T-cell (primary cell): ENCODE measurements at regions of chr7 and their contacts with region 1.

Region 1: GRCh38 chr7:40102897-40103296 is 31.5 kb downstream of the MPLKIP start:
- DNase-seq: no peak
- ATAC-seq: no peak
- H3K4me3 ChIP-seq: no peak overlapping the region
- H3K4me3 Mint-ChIP-seq: no peak overlapping the region
- H3K27ac ChIP-seq: no peak overlapping the region
- H3K27ac Mint-ChIP-seq: no peak overlapping the region
- H3K4me1 ChIP-seq: no peaks in the 10 kb centered on the region
- H3K4me1 Mint-ChIP-seq: no peaks in the 10 kb centered on the region
- H3K27me3 ChIP-seq: no peaks in the 10 kb centered on the region
- H3K27me3 Mint-ChIP-seq: no peaks in the 10 kb centered on the region

Region 2: GRCh38 chr7:39969431-39969830 is 133.5 kb before region 1 on chr7:
- CTCF ChIA-PET with region 1: no interaction called
- POLR2A ChIA-PET with region 1: no interaction called
- DNase-seq: no peak
- ATAC-seq: no peak
- H3K4me3 ChIP-seq: no peak overlapping the region
- H3K4me3 Mint-ChIP-seq: peak overlapping the region in 1 of 3 donors; percentile 60
- H3K27ac ChIP-seq: no peak overlapping the region
- H3K27ac Mint-ChIP-seq: peak overlapping the region; percentile 23 to 41
- H3K4me1 ChIP-seq: peaks cover 8 to 21% of the 10 kb centered on the region in 2 experiments
- H3K4me1 Mint-ChIP-seq: peaks cover 95 to 98% (median 95%) of the 10 kb centered on the region in 3 donors
- H3K27me3 ChIP-seq: no peaks in the 10 kb centered on the region
- H3K27me3 Mint-ChIP-seq: no peaks in the 10 kb centered on the region

Region 3: GRCh38 chr7:40047661-40048060 is 55.2 kb before region 1 on chr7:
- CTCF ChIA-PET with region 1: no interaction called
- POLR2A ChIA-PET with region 1: no interaction called
- DNase-seq: no peak
- ATAC-seq: no peak
- H3K4me3 ChIP-seq: no peak overlapping the region
- H3K4me3 Mint-ChIP-seq: no peak overlapping the region
- H3K27ac ChIP-seq: no peak overlapping the region
- H3K27ac Mint-ChIP-seq: no peak overlapping the region
- H3K4me1 ChIP-seq: no peaks in the 10 kb centered on the region
- H3K4me1 Mint-ChIP-seq: peaks cover 5 to 7% (median 7%) of the 10 kb centered on the region in 3 donors
- H3K27me3 ChIP-seq: no peaks in the 10 kb centered on the region
- H3K27me3 Mint-ChIP-seq: no peaks in the 10 kb centered on the region

Region 4: DNA sequence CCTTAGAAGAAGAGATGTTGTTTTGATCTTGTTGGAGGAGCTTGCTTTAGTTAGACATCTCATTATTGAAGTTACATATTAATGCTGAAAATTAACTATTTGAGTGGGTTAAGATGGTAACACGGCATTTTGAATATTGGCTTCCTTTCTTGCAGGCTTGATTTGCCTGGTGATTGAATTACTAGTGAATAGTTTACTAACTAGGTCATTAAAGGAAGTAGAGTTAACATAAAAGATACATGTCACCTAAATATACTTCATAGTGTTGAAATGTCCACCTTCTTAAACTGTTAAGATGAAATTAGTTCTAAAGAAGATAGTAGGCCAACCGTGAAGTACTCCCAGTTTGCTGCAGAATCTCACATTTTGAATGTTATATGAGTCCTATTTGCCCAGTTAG is 13.0 kb after region 1 on chr7:
- CTCF ChIA-PET with region 1: no interaction called
- POLR2A ChIA-PET with region 1: interaction called in 1 of 2 experiments, 11 read pairs
- DNase-seq: no peak
- ATAC-seq: no peak
- H3K4me3 ChIP-seq: no peak overlapping the region
- H3K4me3 Mint-ChIP-seq: no peak overlapping the region
- H3K27ac ChIP-seq: no peak overlapping the region
- H3K27ac Mint-ChIP-seq: no peak overlapping the region
- H3K4me1 ChIP-seq: no peaks in the 10 kb centered on the region
- H3K4me1 Mint-ChIP-seq: no peaks in the 10 kb centered on the region
- H3K27me3 ChIP-seq: no peaks in the 10 kb centered on the region
- H3K27me3 Mint-ChIP-seq: no peaks in the 10 kb centered on the region

Region 5: GRCh38 chr7:40162516-40162915 is 59.6 kb after region 1 on chr7:
- CTCF ChIA-PET with region 1: no interaction called
- POLR2A ChIA-PET with region 1: no interaction called
- DNase-seq: no peak
- ATAC-seq: no peak
- H3K4me3 ChIP-seq: no peak overlapping the region
- H3K4me3 Mint-ChIP-seq: no peak overlapping the region
- H3K27ac ChIP-seq: no peak overlapping the region
- H3K27ac Mint-ChIP-seq: no peak overlapping the region
- H3K4me1 ChIP-seq: no peaks in the 10 kb centered on the region
- H3K4me1 Mint-ChIP-seq: no peaks in the 10 kb centered on the region
- H3K27me3 ChIP-seq: peaks cover 0 to 3% of the 10 kb centered on the region in 2 experiments
- H3K27me3 Mint-ChIP-seq: peaks cover 0 to 4% of the 10 kb centered on the region in 2 donors

Region 6: DNA sequence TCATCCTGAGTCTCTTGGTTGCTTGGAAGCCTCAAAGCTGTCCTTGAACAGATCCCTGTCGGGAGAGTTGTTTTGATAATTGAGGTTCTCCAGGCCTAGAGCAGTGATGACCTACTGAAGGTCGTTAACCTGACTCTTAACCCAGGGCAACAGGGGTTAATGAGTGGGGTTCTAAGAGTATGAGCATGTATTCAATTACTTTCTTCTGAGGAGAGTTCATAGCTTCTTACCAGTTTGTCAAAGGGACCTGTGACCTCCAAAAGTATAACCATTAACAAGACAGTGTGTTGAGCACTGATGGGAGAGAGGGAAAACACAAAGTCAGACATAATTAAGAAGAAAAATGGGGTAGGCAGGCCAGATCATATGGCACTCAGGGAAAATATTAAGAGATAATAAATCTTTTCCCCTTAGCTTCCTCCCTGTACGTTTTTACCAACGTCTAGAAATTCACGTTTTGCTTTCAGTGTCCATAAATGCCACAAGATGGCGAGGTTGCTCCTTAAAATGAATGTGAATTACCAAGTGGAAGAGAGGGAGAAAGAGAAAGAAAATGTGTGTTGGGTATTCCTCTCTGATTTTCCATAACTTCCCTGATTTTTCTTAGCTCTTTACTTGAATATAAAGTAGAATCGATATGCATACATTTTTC is 129.5 kb after region 1 on chr7:
- CTCF ChIA-PET with region 1: no interaction called
- POLR2A ChIA-PET with region 1: no interaction called
- DNase-seq: peak in 1 of 35 experiments; percentile 34
- ATAC-seq: no peak
- H3K4me3 ChIP-seq: no peak overlapping the region
- H3K4me3 Mint-ChIP-seq: no peak overlapping the region
- H3K27ac ChIP-seq: no peak overlapping the region
- H3K27ac Mint-ChIP-seq: no peak overlapping the region
- H3K4me1 ChIP-seq: no peaks in the 10 kb centered on the region
- H3K4me1 Mint-ChIP-seq: peaks cover 5 to 7% (median 7%) of the 10 kb centered on the region in 3 donors
- H3K27me3 ChIP-seq: peaks cover 0 to 2% of the 10 kb centered on the region in 2 experiments
- H3K27me3 Mint-ChIP-seq: no peaks in the 10 kb centered on the region